HEK293 (cell line): ENCODE measurements at regions of chr1 and their contacts with region 1.

Region 1: GRCh38 chr1:201348211-201348566 is 29.3 kb downstream of the TNNT2 start:
- H3K4me3 ChIP-seq: no peak overlapping the region
- H3K27ac ChIP-seq: no peak overlapping the region
- H3K4me1 ChIP-seq: no peaks in the 10 kb centered on the region
- CTCF ChIP-seq: peak; percentile 70

Region 2: DNA sequence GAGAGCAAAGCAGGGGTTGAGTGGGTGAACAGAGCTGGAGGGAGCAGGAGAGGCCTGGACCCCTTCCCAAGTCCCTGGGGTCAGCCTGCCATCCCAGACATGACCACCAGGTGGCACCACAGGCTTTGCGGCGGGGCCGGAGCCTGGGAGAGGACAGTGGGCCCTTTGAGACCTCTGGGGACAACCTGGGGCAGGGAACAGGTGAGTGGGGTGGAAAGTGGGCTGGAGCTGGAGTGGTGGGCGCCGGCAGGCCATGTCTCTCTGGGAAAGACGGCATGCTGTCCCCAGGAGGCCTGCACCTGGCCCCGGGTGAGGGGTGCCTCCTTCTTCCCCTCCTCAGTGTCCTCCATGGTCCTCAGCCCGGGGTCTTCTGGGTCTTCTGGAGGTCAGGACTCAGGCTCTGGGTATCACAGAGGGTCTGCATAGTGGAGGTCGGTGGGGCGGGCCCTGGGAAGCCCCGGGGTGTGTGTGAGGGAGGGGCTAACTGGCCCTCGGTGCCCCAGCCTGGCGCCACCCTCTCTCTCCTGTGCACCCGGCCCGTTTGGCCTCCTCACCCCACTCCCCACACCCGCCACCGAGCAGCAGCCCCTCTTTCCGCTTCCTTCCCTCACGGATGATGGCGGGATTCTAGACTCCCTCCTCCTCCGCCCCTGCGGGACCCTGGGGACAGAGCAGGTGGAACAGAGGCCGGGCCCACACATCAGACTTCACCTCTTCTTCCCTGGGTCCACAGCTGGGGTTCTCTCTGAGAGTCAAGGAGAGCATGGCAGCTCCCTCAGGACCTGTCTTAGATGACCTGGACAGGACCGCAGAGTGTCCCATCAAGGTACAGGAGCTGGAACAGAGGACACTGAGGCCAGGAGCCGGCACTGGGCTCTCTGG is 93.3 kb before region 1 on chr1:
- CTCF ChIA-PET with region 1: interaction called, 35 read pairs
- POLR2A ChIA-PET with region 1: no interaction called
- H3K4me3 ChIP-seq: no peak overlapping the region
- H3K27ac ChIP-seq: no peak overlapping the region
- H3K4me1 ChIP-seq: no peaks in the 10 kb centered on the region
- CTCF ChIP-seq: peak; percentile 91

Region 3: GRCh38 chr1:201281581-201281980 is 66.6 kb before region 1 on chr1:
- CTCF ChIA-PET with region 1: interaction called, 11 read pairs
- POLR2A ChIA-PET with region 1: no interaction called
- H3K4me3 ChIP-seq: no peak overlapping the region
- H3K27ac ChIP-seq: no peak overlapping the region
- H3K4me1 ChIP-seq: no peaks in the 10 kb centered on the region
- CTCF ChIP-seq: no peak

Region 4: DNA sequence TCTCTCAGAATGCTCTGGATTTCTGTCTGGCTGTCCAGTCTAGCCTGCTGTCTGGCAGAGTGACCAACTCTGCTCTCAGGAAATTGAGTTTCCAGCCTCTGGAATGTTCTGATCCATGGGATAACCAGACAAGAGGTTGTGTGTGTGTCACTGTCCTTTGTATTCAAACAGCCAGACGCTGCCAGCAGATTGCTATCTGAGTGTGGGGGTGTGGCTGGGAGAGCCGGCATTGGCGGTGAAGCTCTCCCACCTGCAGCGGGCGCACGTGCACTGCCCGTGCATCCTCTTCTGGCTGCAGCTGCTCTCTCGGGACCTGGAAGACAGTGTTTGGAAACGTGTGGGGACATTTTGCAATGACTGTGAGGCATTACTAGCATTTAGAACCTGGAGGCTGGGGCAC is 38.8 kb before region 1 on chr1:
- CTCF ChIA-PET with region 1: interaction called, 44 read pairs
- POLR2A ChIA-PET with region 1: no interaction called
- H3K4me3 ChIP-seq: no peak overlapping the region
- H3K27ac ChIP-seq: no peak overlapping the region
- H3K4me1 ChIP-seq: no peaks in the 10 kb centered on the region; the same call in 1 of the 2 replicates
- CTCF ChIP-seq: peak; percentile 83

Region 5: DNA sequence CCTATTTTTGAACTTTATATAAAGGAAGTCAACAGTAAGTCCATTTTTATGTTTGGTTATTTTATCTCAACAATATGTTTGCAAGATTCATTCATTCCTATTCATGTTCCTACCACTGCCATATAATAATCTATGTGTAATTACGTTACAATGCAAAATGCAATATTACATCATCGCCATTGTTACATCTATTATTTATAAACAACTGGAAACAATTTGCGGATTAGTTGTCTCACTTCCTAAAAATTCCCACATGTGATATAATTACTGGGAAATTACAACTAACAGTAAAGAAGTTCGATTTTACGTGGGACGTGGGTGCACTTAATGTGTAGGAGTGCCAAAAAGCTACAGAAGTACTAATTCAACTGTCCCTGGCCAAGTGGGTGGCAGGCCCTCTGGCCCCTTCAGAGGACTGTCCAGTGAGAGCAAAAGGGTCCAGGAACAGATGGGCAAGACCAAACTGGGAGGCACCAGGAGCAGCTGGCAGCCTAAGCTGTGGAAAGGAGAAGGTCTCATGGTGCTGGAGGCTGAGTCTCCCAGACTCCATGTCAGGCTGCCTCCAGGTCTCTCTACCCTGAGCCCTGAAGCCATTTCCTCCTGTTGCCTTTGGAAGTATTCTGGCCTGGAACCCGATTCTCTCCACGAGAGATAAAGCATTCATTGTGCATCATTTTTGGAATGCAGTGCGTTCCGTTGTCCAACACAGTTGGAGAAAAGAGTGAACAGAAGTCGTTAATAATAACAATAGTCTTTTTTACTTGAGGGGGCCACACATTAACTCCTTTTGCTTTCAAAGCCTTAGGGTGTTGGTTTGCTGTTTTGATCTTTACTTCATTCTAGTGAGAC is 13.6 kb before region 1 on chr1:
- CTCF ChIA-PET with region 1: interaction called, 18 read pairs
- POLR2A ChIA-PET with region 1: no interaction called
- H3K4me3 ChIP-seq: no peak overlapping the region
- H3K27ac ChIP-seq: no peak overlapping the region
- H3K4me1 ChIP-seq: no peaks in the 10 kb centered on the region
- CTCF ChIP-seq: no peak

Region 6: GRCh38 chr1:201361652-201362504 is 13.7 kb after region 1 on chr1:
- CTCF ChIA-PET with region 1: interaction called, 70 read pairs
- POLR2A ChIA-PET with region 1: interaction called, 3 read pairs
- H3K4me3 ChIP-seq: no peak overlapping the region
- H3K27ac ChIP-seq: no peak overlapping the region
- H3K4me1 ChIP-seq: no peaks in the 10 kb centered on the region
- CTCF ChIP-seq: peak; percentile 82

Region 7: DNA sequence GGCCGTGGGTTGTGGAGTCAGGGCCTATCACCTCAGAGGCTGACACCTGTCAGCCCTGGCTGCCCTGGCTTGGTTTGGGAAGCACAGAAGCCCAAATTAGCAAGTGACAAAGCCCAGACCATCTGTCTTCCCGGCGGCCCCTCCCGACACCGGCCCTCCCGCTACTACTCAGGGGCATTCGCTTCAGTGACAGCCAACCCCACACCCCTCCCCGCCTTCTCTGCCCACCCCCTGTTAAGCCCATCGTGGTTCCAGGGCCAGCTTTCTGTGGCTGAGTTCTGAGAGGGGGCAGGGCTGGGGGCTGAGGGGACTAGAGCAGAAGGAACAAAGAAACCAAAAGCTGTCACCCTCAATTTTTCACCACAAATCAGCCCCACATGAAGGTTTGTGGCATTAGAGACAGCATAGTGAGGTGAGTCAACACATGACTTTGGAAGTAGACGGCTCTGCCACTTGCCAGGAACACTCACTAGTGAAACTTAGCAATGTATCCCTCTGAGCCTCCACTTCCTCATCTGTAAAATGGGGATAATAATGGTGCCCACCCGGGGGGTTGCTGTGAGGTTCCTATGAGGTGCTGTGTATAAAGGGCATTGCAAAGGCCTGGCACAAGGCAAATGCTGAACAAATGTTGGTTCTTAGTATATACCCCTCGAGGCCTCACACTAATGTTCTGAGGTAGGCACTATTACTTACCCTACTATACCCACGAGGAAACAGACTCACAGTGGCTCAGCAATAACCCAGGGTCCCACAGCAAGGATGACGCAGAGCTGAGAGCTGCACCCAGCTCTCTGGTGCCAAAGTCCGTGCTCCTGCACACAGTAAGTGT is 78.5 kb after region 1 on chr1:
- CTCF ChIA-PET with region 1: no interaction called
- POLR2A ChIA-PET with region 1: no interaction called
- H3K4me3 ChIP-seq: no peak overlapping the region
- H3K27ac ChIP-seq: no peak overlapping the region
- H3K4me1 ChIP-seq: no peaks in the 10 kb centered on the region
- CTCF ChIP-seq: no peak